Uterus (tissue), 4 donors: ENCODE measurements at regions of chr9 and their contacts with region 1.

Region 1: DNA sequence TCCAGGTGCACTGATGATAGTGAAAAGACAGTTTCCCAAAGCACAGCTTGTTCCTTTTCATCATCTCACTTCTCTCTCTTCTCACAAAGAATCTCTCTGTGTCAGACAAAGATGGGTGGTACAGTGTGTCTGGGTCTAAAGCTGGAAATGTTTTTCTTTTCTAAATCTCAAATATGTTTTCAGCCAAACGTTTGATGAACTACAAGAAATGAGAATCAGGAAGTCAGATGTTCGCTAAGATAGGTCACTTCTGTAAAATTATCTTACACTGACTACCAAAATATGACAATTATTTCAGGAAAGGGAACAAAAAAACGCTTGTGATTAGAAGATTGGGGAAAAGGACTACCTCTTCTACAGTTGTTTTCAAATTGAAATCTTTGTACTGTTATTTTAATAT is 708.8 kb downstream of the PTPRD start:
- DNase-seq: no peak
- H3K4me3 ChIP-seq: no peak overlapping the region
- H3K27ac ChIP-seq: no peak overlapping the region
- H3K4me1 ChIP-seq: no peaks in the 10 kb centered on the region
- H3K27me3 ChIP-seq: no peaks in the 10 kb centered on the region
- CTCF ChIP-seq: no peak
- POLR2A ChIP-seq: no peak

Region 2: GRCh38 chr9:9846557-9846956 is 57.5 kb before region 1 on chr9:
- intact Hi-C with region 1: loop called (anchors 10 kb)
- DNase-seq: no peak
- H3K4me3 ChIP-seq: no peak overlapping the region
- H3K27ac ChIP-seq: no peak overlapping the region
- H3K4me1 ChIP-seq: no peaks in the 10 kb centered on the region
- H3K27me3 ChIP-seq: no peaks in the 10 kb centered on the region
- CTCF ChIP-seq: no peak
- POLR2A ChIP-seq: no peak

Region 3: DNA sequence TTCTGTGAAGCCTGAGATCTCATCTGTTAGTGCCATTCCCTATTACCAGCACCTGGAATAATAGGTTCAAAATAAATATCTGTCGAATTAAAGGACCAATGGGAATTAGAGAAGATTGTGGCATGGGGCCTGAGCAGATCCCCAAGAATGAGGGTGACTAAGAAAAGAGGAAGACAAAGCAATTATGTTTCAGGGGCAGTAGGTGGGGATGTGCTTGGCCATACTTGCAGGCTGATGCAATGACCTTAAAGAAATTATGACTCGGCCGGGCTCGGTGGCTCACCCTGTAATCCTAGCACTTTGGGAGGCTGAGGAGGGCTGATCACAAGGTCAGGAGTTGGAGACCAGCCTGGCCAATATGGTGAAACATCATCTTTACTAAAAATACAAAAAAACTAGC is 146.0 kb after region 1 on chr9:
- intact Hi-C with region 1: no loop called
- DNase-seq: no peak
- H3K4me3 ChIP-seq: no peak overlapping the region
- H3K27ac ChIP-seq: no peak overlapping the region
- H3K4me1 ChIP-seq: no peaks in the 10 kb centered on the region
- H3K27me3 ChIP-seq: no peaks in the 10 kb centered on the region
- CTCF ChIP-seq: no peak
- POLR2A ChIP-seq: no peak